Natural killer cell (primary cell): ENCODE measurements at regions of chr5 and their contacts with region 1.

Region 1: DNA sequence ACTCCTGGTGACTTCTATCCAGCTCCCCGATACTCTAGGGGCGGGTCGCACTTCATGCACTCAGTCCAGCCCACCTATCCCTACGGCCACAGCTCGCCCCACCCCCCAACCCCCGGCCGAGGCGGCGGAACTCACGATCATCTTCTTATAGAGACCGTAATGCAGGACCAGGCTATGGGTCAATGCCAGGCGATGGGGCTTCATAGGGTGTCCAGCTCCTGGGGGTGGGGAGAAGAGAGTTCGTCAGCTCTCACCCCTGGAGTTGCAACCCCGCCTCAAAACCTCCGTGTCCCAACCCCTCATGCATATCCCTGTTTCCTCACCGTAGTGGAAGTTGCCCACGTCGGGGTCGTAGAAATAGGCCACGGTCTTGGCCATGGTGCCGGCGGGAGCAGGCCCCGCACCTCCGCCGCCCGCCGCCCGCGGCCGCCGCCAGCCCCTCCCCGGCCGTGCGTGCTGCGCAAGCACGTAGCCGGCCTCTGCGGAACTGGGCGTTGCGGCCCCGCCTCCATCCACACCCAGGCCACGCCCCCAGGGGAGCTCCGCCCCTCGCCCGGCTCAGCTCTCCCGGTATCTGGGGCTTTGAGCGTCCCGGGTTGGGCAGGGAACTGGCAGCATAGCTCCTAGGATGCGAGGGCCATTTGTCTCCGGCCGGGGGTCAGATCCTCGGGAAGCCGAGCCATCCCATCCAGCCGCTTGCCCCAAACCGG is at the starts of genes HDAC3 and RELL2:
- DNase-seq: peak; percentile 96
- ATAC-seq: peak; percentile 93 to 99 (median 95)
- H3K4me3 ChIP-seq: peak within 1 kb of the TSS; percentile 87
- H3K4me3 Mint-ChIP-seq: peak within 1 kb of the TSS; percentile 86
- H3K27ac ChIP-seq: peak within 1 kb of the TSS; percentile 69
- H3K27ac Mint-ChIP-seq: peak within 1 kb of the TSS; percentile 48 to 84
- H3K4me1 ChIP-seq: peaks cover 30% of the 10 kb centered on the region
- H3K4me1 Mint-ChIP-seq: peaks cover 22 to 36% of the 10 kb centered on the region in 2 donors
- H3K27me3 ChIP-seq: no peaks in the 10 kb centered on the region
- H3K27me3 Mint-ChIP-seq: no peaks in the 10 kb centered on the region
- CTCF ChIP-seq: no peak
- total RNA-seq, gene HDAC3: 66.0 to 85.7 (median 74.7) TPM
- total RNA-seq, gene RELL2: 5.7 to 6.6 (median 6.1) TPM

Region 2: GRCh38 chr5:141590127-141590526 is 46.4 kb before region 1 on chr5:
- intact Hi-C with region 1: loop called (anchors 5 kb)
- DNase-seq: no peak
- ATAC-seq: peak in 1 of 3 donors; percentile 33
- H3K4me3 ChIP-seq: no peak overlapping the region
- H3K4me3 Mint-ChIP-seq: no peak overlapping the region
- H3K27ac ChIP-seq: no peak overlapping the region
- H3K27ac Mint-ChIP-seq: peak overlapping the region; percentile 59 to 82
- H3K4me1 ChIP-seq: peaks cover 14% of the 10 kb centered on the region
- H3K4me1 Mint-ChIP-seq: peaks cover 52 to 56% of the 10 kb centered on the region in 2 donors
- H3K27me3 ChIP-seq: no peaks in the 10 kb centered on the region
- H3K27me3 Mint-ChIP-seq: no peaks in the 10 kb centered on the region
- CTCF ChIP-seq: no peak

Region 3: DNA sequence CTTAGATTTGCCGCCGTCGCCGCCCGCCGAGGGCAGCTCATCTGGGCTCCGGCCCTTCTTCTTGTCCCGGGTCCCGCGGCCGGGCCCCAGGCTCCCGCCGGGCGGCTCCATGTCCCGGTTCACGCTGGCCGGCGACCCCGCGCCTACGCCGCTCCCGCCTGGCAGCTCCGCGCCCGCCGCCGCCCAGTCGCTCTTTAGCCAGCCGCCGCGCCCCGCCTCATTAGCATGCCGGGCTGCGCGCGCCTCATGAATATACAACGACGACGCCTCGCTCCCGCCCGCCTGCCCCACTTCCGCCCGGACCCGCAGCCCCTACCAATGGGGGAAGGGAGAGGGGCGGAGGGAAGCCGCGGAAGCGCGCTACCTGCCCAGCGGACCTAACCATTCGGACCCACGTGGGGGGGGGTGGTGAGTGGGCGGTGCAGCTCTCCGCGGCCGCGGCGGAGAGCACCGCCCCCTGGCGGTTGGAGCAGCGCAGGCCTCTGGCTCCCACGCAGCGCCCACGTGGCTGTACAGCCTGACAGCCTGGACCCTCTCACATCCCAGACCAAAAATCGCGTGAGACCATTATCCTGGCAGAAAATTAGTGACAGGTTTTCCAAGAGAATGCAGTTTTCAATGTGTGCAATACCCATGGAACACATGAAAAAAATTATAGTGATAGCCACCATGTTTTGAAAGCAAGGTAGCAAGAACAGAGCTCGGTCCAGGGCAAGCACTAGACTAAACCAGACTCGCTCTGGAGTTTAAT is 17.6 kb before region 1 on chr5 and contains the start of gene DIAPH1:
- intact Hi-C with region 1: loop called (anchors 2 kb)
- DNase-seq: peak; percentile 96 to 98
- ATAC-seq: peak; percentile 93 to 99 (median 95)
- H3K4me3 ChIP-seq: peak within 1 kb of the TSS; percentile 98
- H3K4me3 Mint-ChIP-seq: peak within 1 kb of the TSS; percentile 100
- H3K27ac ChIP-seq: peak within 1 kb of the TSS; percentile 95
- H3K27ac Mint-ChIP-seq: peak within 1 kb of the TSS; percentile 93 to 96
- H3K4me1 ChIP-seq: peaks cover 26% of the 10 kb centered on the region
- H3K4me1 Mint-ChIP-seq: peaks cover 37 to 38% of the 10 kb centered on the region in 2 donors
- H3K27me3 ChIP-seq: no peaks in the 10 kb centered on the region
- H3K27me3 Mint-ChIP-seq: no peaks in the 10 kb centered on the region
- CTCF ChIP-seq: peak; percentile 94
- total RNA-seq, gene DIAPH1: 410 to 456 (median 419) TPM

Region 4: GRCh38 chr5:141650851-141651727 is 14.5 kb after region 1 on chr5 and contains the start of gene FCHSD1:
- intact Hi-C with region 1: loop called (anchors 1 kb)
- DNase-seq: peak; percentile 82 to 86
- ATAC-seq: peak; percentile 98
- H3K4me3 ChIP-seq: peak within 1 kb of the TSS; percentile 64
- H3K4me3 Mint-ChIP-seq: peak within 1 kb of the TSS; percentile 95
- H3K27ac ChIP-seq: peak within 1 kb of the TSS; percentile 73
- H3K27ac Mint-ChIP-seq: peak within 1 kb of the TSS; percentile 74 to 95
- H3K4me1 ChIP-seq: peaks cover 18% of the 10 kb centered on the region
- H3K4me1 Mint-ChIP-seq: peaks cover 34 to 41% of the 10 kb centered on the region in 2 donors
- H3K27me3 ChIP-seq: no peaks in the 10 kb centered on the region
- H3K27me3 Mint-ChIP-seq: no peaks in the 10 kb centered on the region
- CTCF ChIP-seq: no peak
- total RNA-seq, gene FCHSD1: 134 to 155 (median 147) TPM

Region 5: DNA sequence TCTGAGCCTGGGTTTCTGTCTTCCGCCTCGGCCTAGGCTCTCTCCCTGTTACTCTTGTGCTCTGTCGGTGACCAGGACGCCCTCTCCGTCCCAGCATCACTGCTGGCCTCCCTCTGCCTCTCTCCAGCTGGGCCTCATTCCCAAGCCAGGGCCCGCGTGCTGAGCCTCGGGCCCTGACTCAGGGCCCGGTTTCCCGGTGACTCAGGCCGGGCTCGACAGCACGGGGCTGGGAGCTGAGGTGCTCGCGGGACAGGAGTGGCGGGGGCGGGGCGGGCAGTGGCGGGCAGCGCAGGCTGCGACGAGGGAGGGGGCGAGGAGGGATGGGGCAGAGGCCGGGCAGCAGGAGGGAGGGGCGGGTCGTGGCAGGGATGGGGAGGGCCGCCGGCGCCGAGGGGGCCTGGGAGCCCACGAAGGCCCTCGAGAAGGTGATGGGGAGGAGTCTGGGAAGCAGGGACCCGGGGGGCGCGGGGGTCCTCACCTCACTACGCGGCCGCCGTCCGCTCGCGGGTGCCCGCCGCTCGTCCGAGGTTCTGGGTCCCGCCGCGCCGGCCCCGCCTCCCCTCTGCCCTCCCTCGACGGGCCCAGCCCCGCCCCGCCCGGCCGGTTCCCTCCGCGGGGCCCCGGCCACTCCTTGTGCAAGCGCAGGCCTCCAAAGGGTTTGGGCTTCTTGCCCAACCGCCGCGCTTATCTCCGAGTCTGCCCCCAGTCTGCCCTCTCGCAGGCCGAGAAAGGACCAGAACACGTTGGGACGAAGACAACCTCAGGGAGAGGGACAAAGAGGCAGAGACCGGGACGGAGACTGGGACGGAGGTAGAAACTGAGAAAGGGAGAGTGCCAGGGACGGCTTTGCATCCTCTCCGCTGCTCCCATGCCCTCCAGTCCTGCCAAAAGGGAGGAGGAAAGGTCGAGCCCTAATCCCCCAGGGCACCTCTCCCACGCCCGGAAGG is 45.4 kb after region 1 on chr5 and contains the start of gene ARAP3:
- intact Hi-C with region 1: loop called (anchors 5 kb)
- DNase-seq: peak; percentile 49 to 51
- ATAC-seq: peak; percentile 74 to 83 (median 75)
- H3K4me3 ChIP-seq: peak within 1 kb of the TSS; percentile 57
- H3K4me3 Mint-ChIP-seq: peak within 1 kb of the TSS; percentile 95
- H3K27ac ChIP-seq: peak within 1 kb of the TSS; percentile 51
- H3K27ac Mint-ChIP-seq: peak within 1 kb of the TSS; percentile 76 to 81
- H3K4me1 ChIP-seq: peaks cover 36% of the 10 kb centered on the region
- H3K4me1 Mint-ChIP-seq: peaks cover 22 to 50% of the 10 kb centered on the region in 2 donors
- H3K27me3 ChIP-seq: no peaks in the 10 kb centered on the region
- H3K27me3 Mint-ChIP-seq: no peaks in the 10 kb centered on the region
- CTCF ChIP-seq: no peak
- total RNA-seq, gene ARAP3: 13.9 to 25.2 (median 19.6) TPM

Region 6: GRCh38 chr5:141889282-141889871 is 252.8 kb after region 1 on chr5:
- intact Hi-C with region 1: no loop called
- DNase-seq: no peak
- ATAC-seq: no peak
- H3K4me3 ChIP-seq: no peak overlapping the region
- H3K4me3 Mint-ChIP-seq: no peak overlapping the region
- H3K27ac ChIP-seq: no peak overlapping the region
- H3K27ac Mint-ChIP-seq: no peak overlapping the region
- H3K4me1 ChIP-seq: no peaks in the 10 kb centered on the region
- H3K4me1 Mint-ChIP-seq: no peaks in the 10 kb centered on the region
- H3K27me3 ChIP-seq: peaks cover 10% of the 10 kb centered on the region
- H3K27me3 Mint-ChIP-seq: peaks cover 17 to 20% of the 10 kb centered on the region in 2 donors
- CTCF ChIP-seq: no peak